Activated CD4-positive, alpha-beta T cell treated with anti-CD3 and anti-CD28 coated beads, Interleukin-2, amount 10 ng/mL, durations not matched to agents 24 days and 14 days (primary cell): ENCODE measurements at regions of chr3 and their contacts with region 1.

Region 1: DNA sequence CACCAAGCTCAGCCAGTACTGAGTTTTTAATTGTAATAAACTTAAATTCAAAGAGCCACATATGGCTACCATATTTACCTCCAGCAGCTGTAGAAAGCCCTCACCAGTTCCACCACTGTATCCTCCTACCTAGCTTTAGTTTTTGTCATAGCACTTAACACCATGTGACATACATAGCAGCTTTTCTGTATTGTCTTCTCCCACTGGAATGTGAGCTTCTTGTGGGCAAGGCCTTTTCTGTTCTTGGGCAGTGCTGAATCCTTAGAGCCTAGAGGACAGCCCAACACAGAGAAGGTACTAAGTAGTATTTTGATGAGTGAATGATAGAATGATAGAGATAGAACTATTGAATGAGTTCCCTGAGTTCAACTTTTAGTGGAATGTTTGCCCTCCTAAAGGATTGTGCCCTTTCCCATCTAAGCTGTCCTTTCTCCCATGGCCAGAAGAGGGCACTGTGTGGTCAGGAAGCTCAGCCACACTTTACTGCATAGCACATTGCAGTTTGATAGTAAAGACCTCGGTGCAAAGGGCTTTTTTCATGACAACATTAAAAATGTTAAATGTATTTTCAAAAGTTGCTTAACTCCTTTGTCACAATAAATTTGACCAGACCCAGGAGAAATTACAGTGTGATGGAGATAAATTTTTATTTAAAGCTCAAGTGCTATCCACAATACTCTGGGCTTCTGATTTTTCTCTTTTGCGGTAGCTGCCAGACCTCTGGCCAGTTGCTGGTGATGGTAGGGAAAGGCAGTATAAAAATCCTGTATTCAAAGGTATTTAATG is 115.8 kb downstream of the GHSR start:
- DNase-seq: peak; percentile 88
- H3K4me3 Mint-ChIP-seq: no peak overlapping the region
- H3K27ac Mint-ChIP-seq: no peak overlapping the region
- H3K4me1 Mint-ChIP-seq: peaks cover 6% of the 10 kb centered on the region
- H3K27me3 Mint-ChIP-seq: no peaks in the 10 kb centered on the region

Region 2: DNA sequence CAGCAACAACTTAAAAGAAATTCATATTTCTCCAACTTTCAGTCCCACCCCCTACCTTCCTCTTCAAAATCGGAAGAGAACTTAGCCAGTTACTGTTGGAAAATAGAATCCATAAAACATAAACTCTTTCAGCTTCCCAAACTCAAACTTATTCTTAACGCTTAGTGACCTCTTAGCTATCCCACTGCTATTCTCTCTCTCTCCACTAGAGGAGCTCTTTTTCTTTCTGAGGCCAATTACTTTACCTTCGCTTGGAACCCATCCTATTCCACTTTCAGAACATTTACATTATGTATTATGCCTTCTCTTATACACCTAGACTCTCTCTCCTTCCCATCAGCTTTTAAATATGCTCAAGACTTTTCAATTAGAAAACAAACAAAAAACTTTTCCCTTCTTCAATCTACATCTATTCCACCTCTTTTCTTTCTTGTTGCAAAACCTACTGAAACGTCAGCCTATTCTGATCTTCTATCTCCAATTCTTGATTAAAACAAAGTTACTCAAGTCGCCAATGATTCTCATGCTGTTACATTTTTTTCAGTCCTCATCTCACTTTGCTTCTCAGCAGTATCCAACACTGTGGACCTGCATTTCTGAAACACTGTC is 129.2 kb after region 1 on chr3:
- intact Hi-C with region 1: no loop called
- DNase-seq: no peak
- H3K4me3 Mint-ChIP-seq: no peak overlapping the region
- H3K27ac Mint-ChIP-seq: no peak overlapping the region
- H3K4me1 Mint-ChIP-seq: peaks cover 6% of the 10 kb centered on the region
- H3K27me3 Mint-ChIP-seq: peaks cover 7% of the 10 kb centered on the region

Region 3: DNA sequence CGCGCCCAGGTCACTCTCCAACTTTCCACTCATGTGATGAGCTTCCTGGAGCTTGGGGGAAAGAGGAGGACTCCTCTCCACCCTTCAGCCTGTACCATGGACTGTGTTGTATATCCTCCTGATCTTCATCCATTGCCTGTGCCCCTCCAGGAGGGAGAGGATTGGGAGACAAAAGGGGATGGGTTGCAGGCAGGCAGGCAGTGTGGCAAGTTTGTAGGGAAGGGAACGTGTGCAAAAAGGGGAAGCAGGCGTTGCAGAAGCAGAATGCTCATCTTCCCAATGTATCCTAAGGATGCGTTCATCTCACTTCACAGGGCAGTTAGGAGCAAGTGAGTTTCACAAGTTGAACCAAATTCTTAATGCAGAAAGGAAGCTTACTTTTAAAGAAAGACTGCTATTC is 143.9 kb after region 1 on chr3:
- intact Hi-C with region 1: loop called (anchors 10 kb)
- DNase-seq: no peak
- H3K4me3 Mint-ChIP-seq: peak overlapping the region; percentile 87
- H3K27ac Mint-ChIP-seq: no peak overlapping the region
- H3K4me1 Mint-ChIP-seq: peaks cover 17% of the 10 kb centered on the region
- H3K27me3 Mint-ChIP-seq: peaks cover 9% of the 10 kb centered on the region

Region 4: DNA sequence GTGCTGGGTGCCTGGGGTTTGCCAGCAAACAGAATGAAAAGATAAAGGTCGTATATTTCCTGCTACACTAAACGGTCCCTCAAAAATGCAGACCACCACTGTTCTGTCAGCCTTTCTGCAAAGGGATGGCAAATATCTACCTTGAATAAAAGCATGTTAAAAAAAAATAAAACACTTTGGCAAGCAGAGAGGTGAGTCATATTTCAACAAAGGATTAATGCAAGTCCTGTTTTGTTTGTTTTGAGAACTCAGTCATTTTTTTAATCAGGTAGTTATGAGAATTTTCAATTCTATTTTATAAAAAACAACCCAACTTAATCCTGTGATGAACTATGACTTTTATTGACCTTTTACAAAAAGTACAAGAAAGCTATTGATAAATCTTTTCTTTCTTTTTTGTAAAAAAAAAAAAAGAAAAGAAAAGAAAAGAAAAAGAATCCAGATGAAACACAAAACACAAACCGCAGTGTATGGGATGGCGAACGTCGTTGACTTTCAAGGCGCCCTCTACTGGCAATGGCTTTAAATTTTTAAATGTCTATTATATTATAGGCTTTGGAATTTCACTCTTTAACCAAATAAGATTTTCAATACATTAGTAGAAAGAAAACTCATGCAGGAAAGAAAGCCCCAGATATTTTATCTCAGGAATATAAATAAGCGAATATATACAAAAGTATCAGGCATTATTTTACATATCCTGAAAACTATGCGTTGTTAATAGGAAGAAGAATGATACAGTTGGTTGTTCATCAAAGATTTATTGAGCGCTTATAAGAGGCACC is 290.7 kb after region 1 on chr3:
- intact Hi-C with region 1: loop called (anchors 2 kb)
- DNase-seq: peak; percentile 83
- H3K4me3 Mint-ChIP-seq: peak overlapping the region; percentile 52
- H3K27ac Mint-ChIP-seq: no peak overlapping the region
- H3K4me1 Mint-ChIP-seq: peaks cover 10% of the 10 kb centered on the region
- H3K27me3 Mint-ChIP-seq: no peaks in the 10 kb centered on the region

Region 5: DNA sequence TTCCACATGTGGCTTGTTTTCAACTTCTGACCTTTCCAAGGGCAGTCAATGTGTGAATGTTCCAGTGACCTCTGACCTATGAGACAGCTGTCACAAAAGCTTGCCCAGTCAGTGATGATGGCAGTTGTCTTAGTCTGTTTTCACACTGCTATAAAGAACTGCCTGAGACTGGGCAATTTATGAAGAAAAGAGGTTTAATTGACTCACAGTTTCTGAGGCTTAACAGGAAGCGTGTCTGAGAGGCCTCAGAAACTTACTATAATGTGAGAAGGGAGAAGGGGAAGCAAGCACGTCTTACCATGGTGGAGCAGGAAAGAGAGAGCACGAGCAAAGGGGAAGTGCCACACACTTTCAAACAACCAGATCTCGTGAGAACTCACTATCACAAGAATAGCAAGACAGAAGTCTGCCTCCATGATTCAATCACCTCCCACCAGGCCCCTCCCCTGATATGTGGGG is 513.7 kb after region 1 on chr3:
- intact Hi-C with region 1: no loop called
- DNase-seq: no peak
- H3K4me3 Mint-ChIP-seq: no peak overlapping the region
- H3K27ac Mint-ChIP-seq: peak overlapping the region; percentile 62
- H3K4me1 Mint-ChIP-seq: peaks cover 4% of the 10 kb centered on the region
- H3K27me3 Mint-ChIP-seq: peaks cover 19% of the 10 kb centered on the region